Panc1 (cell line): ENCODE measurements at regions of chr1 and their contacts with region 1.

Region 1: GRCh38 chr1:34597877-34598514 is 156.9 kb upstream of the GJB5 start:
- DNase-seq: peak; percentile 42
- ATAC-seq: peak; percentile 95
- H3K4me3 ChIP-seq: no peak overlapping the region
- H3K27ac ChIP-seq: no peak overlapping the region
- H3K4me1 ChIP-seq: no peaks in the 10 kb centered on the region
- H3K27me3 ChIP-seq: peaks cover 3% of the 10 kb centered on the region
- CTCF ChIP-seq: peak; percentile 95

Region 2: GRCh38 chr1:33342041-33342723 is 1255.8 kb before region 1 on chr1:
- CTCF ChIA-PET with region 1: no interaction called
- POLR2A ChIA-PET with region 1: no interaction called
- in situ Hi-C with region 1: no loop called
- intact Hi-C with region 1: no loop called
- DNase-seq: peak; percentile 91
- ATAC-seq: peak; percentile 88
- H3K4me3 ChIP-seq: peak overlapping the region in 1 of 2 experiments; percentile 26; a peak in 2 of 4 replicates
- H3K27ac ChIP-seq: peak overlapping the region; percentile 93
- H3K4me1 ChIP-seq: peaks cover 99% of the 10 kb centered on the region
- H3K27me3 ChIP-seq: no peaks in the 10 kb centered on the region
- CTCF ChIP-seq: no peak

Region 3: DNA sequence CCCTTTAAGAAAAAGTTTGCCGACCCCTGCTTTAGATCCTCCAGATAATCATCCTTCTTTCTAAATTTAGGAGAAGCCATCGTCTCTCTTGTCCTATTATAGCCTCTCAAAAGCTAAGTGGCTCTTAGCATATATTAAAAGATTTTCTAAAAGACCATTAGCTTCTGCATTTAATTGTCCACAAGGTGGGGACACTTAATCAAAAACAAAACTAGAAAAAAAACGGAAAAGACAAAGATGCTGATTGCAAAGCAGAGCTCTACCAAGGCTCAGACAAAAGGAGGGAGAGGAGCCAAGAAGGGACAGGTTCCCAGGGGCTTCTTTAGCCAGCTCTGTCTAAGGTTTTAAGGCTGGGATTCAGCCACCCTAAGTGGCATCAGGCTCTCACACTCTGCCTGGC is 862.4 kb before region 1 on chr1:
- CTCF ChIA-PET with region 1: no interaction called
- POLR2A ChIA-PET with region 1: no interaction called
- in situ Hi-C with region 1: no loop called
- intact Hi-C with region 1: loop called (anchors 5 kb)
- DNase-seq: no peak
- ATAC-seq: no peak
- H3K4me3 ChIP-seq: no peak overlapping the region
- H3K27ac ChIP-seq: no peak overlapping the region
- H3K4me1 ChIP-seq: no peaks in the 10 kb centered on the region
- H3K27me3 ChIP-seq: peaks cover 26% of the 10 kb centered on the region
- CTCF ChIP-seq: peak; percentile 43

Region 4: GRCh38 chr1:34113887-34114286 is 484.1 kb before region 1 on chr1:
- CTCF ChIA-PET with region 1: no interaction called
- POLR2A ChIA-PET with region 1: no interaction called
- in situ Hi-C with region 1: no loop called
- intact Hi-C with region 1: loop called (anchors 5 kb)
- DNase-seq: peak; percentile 8
- ATAC-seq: no peak
- H3K4me3 ChIP-seq: no peak overlapping the region
- H3K27ac ChIP-seq: no peak overlapping the region
- H3K4me1 ChIP-seq: no peaks in the 10 kb centered on the region
- H3K27me3 ChIP-seq: no peaks in the 10 kb centered on the region
- CTCF ChIP-seq: peak; percentile 49; the same call in 1 of the 2 replicates

Region 5: GRCh38 chr1:34460193-34460592 is 137.8 kb before region 1 on chr1:
- CTCF ChIA-PET with region 1: interaction called, 3 read pairs
- POLR2A ChIA-PET with region 1: interaction called, 13 read pairs
- in situ Hi-C with region 1: no loop called
- intact Hi-C with region 1: loop called (anchors 10 kb)
- DNase-seq: peak; percentile 10
- ATAC-seq: peak; percentile 62; the same call in 1 of the 2 replicates
- H3K4me3 ChIP-seq: no peak overlapping the region
- H3K27ac ChIP-seq: no peak overlapping the region
- H3K4me1 ChIP-seq: no peaks in the 10 kb centered on the region
- H3K27me3 ChIP-seq: no peaks in the 10 kb centered on the region
- CTCF ChIP-seq: peak; percentile 77

Region 6: GRCh38 chr1:34759503-34760357 is 161.7 kb after region 1 on chr1 and contains the start of gene GJB4:
- CTCF ChIA-PET with region 1: no interaction called
- POLR2A ChIA-PET with region 1: no interaction called
- in situ Hi-C with region 1: no loop called
- intact Hi-C with region 1: no loop called
- DNase-seq: no peak
- ATAC-seq: no peak
- H3K4me3 ChIP-seq: no peak within 1 kb of the TSS
- H3K27ac ChIP-seq: no peak within 1 kb of the TSS
- H3K4me1 ChIP-seq: no peaks in the 10 kb centered on the region; the same call in 1 of the 2 replicates
- H3K27me3 ChIP-seq: no peaks in the 10 kb centered on the region
- CTCF ChIP-seq: no peak
- total RNA-seq, gene GJB4: not detected